H1 (cell line): ENCODE measurements at regions of chr9 and their contacts with region 1.

Region 1: DNA sequence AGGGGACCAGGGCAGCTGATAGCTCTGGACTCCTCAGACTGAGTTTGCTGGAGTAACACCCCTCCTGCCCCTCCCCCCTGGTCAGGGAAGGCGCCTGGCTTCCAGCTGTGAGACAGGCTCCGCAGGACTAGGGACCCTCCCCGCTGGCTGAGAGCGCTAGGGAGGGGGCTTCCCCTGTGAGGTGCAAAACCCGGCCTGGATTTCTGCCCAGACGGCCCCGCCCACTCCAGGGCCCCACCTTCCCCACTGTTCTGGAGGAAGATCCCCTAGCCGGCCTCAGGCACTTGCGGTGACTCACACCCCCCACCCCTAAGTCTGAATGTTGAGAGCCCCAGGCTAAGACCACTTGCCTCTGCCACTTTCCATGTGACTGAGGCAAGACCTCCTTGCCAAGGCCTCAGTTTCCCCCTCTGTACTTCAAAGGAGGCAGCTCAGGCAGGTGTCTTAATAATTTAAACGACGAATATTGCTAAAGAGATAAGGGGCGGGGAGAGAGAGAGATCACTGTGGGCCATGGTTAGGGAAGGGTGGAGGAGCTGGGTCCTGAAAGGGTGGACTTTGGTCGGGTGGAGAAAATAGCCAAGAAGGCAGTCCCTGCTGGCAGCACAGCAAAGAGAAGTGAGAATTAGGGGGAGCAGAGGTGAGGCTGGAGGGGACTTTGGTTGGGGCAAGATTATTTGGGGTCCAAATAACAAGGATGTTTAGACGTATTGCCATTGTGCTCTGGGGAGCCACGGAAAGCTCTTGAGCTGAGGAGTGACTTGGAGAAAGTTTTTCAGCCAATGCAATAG is 1.0 kb upstream of the DAB2IP start:
- DNase-seq: peak; percentile 70 to 93
- H3K4me3 ChIP-seq: peak overlapping the region; percentile 34 to 69 (median 56); a peak in 7 of 8 replicates
- H3K27ac ChIP-seq: no peak overlapping the region
- H3K4me1 ChIP-seq: peaks cover 10 to 43% (median 26%) of the 10 kb centered on the region in 4 experiments
- H3K27me3 ChIP-seq: peaks cover 0 to 7% (median 0%) of the 10 kb centered on the region in 4 experiments; a peak in 2 of 7 replicates
- CTCF ChIP-seq: no peak
- EP300 ChIP-seq: peak in 1 of 2 experiments; percentile 52; a peak in 1 of 3 replicates
- POLR2A ChIP-seq: no peak
- RAD21 ChIP-seq: no peak

Region 2: DNA sequence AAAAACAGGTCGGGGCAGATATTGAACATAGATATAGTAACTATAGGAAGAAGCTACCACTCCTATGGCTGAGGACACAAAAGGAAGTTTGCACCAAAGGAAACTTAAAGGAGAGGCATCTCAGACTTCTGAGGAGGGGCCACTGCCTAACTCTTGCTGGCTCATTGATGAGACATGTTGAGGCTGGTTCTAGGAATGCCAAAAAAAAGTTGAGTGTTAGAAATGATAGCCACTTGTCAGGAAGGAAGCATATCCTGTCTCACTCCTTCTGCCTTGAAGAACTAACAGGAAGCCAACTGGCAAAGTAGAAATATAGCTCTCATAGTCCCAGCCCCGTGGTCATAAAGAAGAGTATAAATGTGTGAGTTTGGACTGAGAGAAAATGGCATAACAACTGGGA is 257.1 kb before region 1 on chr9:
- CTCF ChIA-PET with region 1: no interaction called
- POLR2A ChIA-PET with region 1: no interaction called
- DNase-seq: no peak
- H3K4me3 ChIP-seq: no peak overlapping the region
- H3K27ac ChIP-seq: no peak overlapping the region
- H3K4me1 ChIP-seq: peaks cover 0 to 4% (median 0%) of the 10 kb centered on the region in 4 experiments; a peak in 2 of 7 replicates
- H3K27me3 ChIP-seq: no peaks in the 10 kb centered on the region
- CTCF ChIP-seq: no peak
- EP300 ChIP-seq: no peak
- POLR2A ChIP-seq: no peak
- RAD21 ChIP-seq: no peak

Region 3: GRCh38 chr9:121478816-121479676 is 171.4 kb before region 1 on chr9:
- CTCF ChIA-PET with region 1: no interaction called
- POLR2A ChIA-PET with region 1: no interaction called
- DNase-seq: peak in 1 of 2 experiments; percentile 56
- H3K4me3 ChIP-seq: no peak overlapping the region; a peak in 1 of 8 replicates
- H3K27ac ChIP-seq: no peak overlapping the region
- H3K4me1 ChIP-seq: peaks cover 4 to 6% (median 4%) of the 10 kb centered on the region in 4 experiments; a peak in 5 of 7 replicates
- H3K27me3 ChIP-seq: no peaks in the 10 kb centered on the region
- CTCF ChIP-seq: no peak
- EP300 ChIP-seq: no peak
- POLR2A ChIP-seq: no peak
- RAD21 ChIP-seq: no peak

Region 4: DNA sequence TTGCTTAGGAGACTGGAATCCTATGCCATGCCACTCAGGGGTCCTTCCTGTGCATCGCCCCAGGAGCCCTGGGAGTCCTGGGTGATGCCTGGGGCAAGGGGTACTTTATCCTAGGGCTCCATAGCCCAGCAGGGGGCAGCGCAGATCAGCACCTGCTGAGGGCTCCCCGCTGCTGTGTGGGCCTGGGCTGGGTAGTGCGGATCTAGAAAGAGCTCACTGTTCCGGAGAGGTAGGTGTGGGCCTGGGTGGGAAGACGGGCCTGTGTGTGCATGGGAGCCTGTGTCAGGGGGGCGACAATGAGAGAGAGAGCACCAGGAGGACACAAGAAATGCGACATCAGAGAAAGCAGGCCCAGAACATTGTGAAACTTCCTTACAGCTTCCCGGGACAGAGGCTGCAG is 10.3 kb before region 1 on chr9:
- CTCF ChIA-PET with region 1: interaction called, 25 read pairs
- POLR2A ChIA-PET with region 1: interaction called, 3 read pairs
- DNase-seq: peak in 1 of 2 experiments; percentile 86
- H3K4me3 ChIP-seq: no peak overlapping the region
- H3K27ac ChIP-seq: no peak overlapping the region
- H3K4me1 ChIP-seq: peaks cover 0 to 21% (median 12%) of the 10 kb centered on the region in 4 experiments; a peak in 5 of 7 replicates
- H3K27me3 ChIP-seq: no peaks in the 10 kb centered on the region
- CTCF ChIP-seq: peak; percentile 58 to 69 (median 62)
- EP300 ChIP-seq: no peak
- POLR2A ChIP-seq: no peak
- RAD21 ChIP-seq: peak; percentile 73 to 80